ENCODE measurements at regions of chr9 and their contacts with region 1.

Region 1: GRCh38 chr9:8188720-8189407 is 389.3 kb upstream of the DMAC1 start:
- DNase-seq: peak; percentile 51
- H3K4me3 Mint-ChIP-seq: no peak overlapping the region
- H3K27ac Mint-ChIP-seq: no peak overlapping the region
- H3K4me1 Mint-ChIP-seq: peaks cover 8% of the 10 kb centered on the region
- H3K27me3 Mint-ChIP-seq: peaks cover 6% of the 10 kb centered on the region

Region 2: DNA sequence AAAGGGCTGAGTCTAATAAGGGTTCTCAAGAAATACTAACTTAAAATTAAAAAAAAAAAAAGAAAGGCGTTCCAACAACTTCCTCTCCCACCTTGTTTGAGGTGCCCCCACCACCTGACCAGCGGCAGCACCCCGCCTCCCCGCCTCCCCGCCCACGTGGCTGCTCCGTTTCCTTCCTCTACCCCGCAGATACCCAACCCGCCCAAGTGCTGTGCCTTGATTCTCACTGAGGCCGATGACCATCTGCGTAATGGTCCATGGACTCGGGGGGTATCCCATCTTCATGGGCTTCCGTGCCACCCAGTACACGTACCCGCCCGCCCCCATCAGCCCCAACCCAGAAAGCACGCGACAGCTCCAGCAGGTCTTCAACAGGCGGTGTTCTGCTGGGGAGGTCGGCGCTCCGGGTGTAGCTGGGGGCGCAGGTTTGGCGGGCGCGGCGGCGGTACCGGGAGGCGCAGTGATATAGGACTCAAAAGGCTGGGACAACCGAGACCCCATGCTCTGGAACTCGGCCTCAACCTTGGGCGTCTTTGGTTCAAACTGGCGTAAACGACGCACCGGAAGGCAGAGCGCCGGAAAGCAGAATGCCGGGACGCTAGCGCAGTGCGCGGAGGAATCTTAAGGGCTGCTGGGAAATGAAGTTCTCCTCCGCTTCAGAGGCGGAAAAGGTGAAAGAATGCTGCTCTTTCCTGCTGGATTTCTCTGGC is 389.5 kb before region 1 on chr9 and contains the start of gene DMAC1:
- CTCF ChIA-PET with region 1: no interaction called
- POLR2A ChIA-PET with region 1: no interaction called
- intact Hi-C with region 1: loop called (anchors 5 kb)
- DNase-seq: peak; percentile 85
- H3K4me3 Mint-ChIP-seq: peak within 1 kb of the TSS; percentile 86
- H3K27ac Mint-ChIP-seq: peak within 1 kb of the TSS; percentile 93
- H3K4me1 Mint-ChIP-seq: peaks cover 22% of the 10 kb centered on the region
- H3K27me3 Mint-ChIP-seq: no peaks in the 10 kb centered on the region
- total RNA-seq, gene DMAC1: 45.4 to 46.6 TPM

Region 3: DNA sequence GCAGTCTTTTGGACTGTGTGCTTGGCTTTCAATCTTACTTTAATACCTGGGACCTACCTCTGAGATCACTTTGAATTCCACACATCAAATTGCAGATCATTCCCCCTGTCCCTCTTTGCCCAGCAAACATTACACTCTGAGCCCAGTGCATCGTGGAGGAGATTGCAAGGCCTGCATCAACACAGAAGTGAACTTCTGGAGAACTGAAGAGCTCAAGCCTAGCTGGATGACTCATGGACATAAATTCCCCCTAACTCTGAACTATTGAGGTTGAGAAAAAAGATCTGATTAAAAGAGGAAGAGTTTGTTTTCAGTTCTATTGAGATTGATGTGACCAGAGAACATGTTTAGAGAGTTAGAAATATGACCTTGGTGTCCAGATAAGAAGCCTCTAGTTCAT is 73.3 kb before region 1 on chr9:
- CTCF ChIA-PET with region 1: no interaction called
- POLR2A ChIA-PET with region 1: no interaction called
- intact Hi-C with region 1: loop called (anchors 5 kb)
- DNase-seq: peak; percentile 18
- H3K4me3 Mint-ChIP-seq: no peak overlapping the region
- H3K27ac Mint-ChIP-seq: peak overlapping the region; percentile 44
- H3K4me1 Mint-ChIP-seq: peaks cover 17% of the 10 kb centered on the region
- H3K27me3 Mint-ChIP-seq: no peaks in the 10 kb centered on the region

Region 4: GRCh38 chr9:8429768-8430167 is 240.9 kb after region 1 on chr9:
- CTCF ChIA-PET with region 1: no interaction called
- POLR2A ChIA-PET with region 1: no interaction called
- intact Hi-C with region 1: loop called (anchors 2 kb)
- DNase-seq: no peak
- H3K4me3 Mint-ChIP-seq: no peak overlapping the region
- H3K27ac Mint-ChIP-seq: peak overlapping the region; percentile 80
- H3K4me1 Mint-ChIP-seq: peaks cover 30% of the 10 kb centered on the region
- H3K27me3 Mint-ChIP-seq: no peaks in the 10 kb centered on the region

Region 5: DNA sequence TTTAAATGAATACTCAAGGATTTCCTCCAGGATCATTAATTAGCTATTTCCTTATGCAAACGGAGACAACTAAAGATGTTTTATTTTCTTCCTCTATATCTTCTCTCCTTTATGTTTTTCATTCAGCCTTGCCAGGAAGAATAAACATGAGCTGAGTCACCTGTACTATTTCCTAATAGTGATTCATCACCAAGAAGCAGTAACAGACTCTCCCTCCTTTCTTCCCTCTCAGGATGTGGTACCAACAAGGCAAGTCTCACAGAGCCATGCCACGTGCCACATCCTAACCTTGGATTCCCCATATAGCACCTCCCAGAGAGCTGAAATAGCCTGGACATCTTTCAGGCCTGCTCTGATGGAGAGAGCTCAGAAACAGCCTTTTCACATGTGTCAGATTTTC is 369.3 kb after region 1 on chr9:
- CTCF ChIA-PET with region 1: no interaction called
- POLR2A ChIA-PET with region 1: no interaction called
- intact Hi-C with region 1: no loop called
- DNase-seq: no peak
- H3K4me3 Mint-ChIP-seq: no peak overlapping the region
- H3K27ac Mint-ChIP-seq: no peak overlapping the region
- H3K4me1 Mint-ChIP-seq: no peaks in the 10 kb centered on the region
- H3K27me3 Mint-ChIP-seq: peaks cover 1% of the 10 kb centered on the region